ENCODE measurements at regions of chr13 and their contacts with region 1.

Region 1: DNA sequence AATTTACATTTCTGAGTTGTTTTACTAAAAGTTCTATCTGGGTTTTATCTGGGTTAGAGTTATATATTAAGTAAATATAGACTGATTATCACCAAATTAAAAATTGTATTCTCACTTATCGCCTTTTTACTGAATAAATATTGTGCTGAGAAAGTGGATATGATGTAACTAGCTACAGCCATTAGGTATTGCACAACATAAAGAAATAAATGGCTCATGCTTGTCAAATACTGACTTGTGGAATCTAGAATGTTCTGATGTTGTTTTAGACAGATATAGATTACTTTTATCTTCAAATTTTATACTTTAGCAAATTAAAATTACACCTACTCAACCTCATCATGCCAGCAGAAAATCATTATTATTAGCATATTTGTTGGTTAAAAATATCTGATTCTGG is 1277.1 kb upstream of the MIR17HG start:
- DNase-seq: no peak
- ATAC-seq: no peak
- H3K4me3 ChIP-seq: no peak overlapping the region
- H3K27ac ChIP-seq: no peak overlapping the region
- H3K4me1 ChIP-seq: no peaks in the 10 kb centered on the region
- H3K27me3 ChIP-seq: no peaks in the 10 kb centered on the region

Region 2: DNA sequence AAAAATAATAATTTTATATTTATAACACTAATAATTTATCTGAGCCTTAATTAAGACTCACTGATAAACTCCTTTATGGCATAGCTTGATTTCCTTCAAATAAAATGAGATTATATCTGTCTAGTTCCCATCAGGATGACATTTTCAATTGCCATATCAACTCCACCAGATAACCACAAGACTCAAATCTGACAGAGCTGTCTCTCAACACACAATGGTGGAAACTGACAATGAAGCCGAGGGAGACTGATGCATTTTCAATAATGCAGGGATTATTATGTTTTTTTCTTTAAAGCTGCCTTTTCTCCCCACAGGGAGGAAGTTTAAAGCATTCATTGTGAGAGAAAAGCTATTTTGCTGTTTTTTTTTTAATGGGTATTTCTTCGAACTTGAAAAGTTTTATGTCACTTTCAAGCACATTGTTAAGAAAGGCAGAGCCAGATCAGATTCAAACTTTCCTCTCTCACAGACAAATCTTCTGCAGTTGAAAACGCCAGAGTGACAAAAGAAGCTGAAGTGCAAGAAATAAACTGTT is 49.8 kb before region 1 on chr13:
- intact Hi-C with region 1: loop called in 1 of 4 experiments (anchors 10 kb)
- DNase-seq: no peak
- ATAC-seq: no peak
- H3K4me3 ChIP-seq: no peak overlapping the region
- H3K27ac ChIP-seq: no peak overlapping the region
- H3K4me1 ChIP-seq: no peaks in the 10 kb centered on the region
- H3K27me3 ChIP-seq: no peaks in the 10 kb centered on the region